ENCODE measurements at regions of chr1 and their contacts with region 1.

Region 1: GRCh38 chr1:192489748-192490147 is 85.8 kb upstream of the RGS1 start:
- DNase-seq: peak; percentile 53 to 80
- H3K4me3 ChIP-seq: no peak overlapping the region
- H3K27ac ChIP-seq: peak overlapping the region in 1 of 2 donors; percentile 56
- H3K4me1 ChIP-seq: peaks cover 0 to 9% of the 10 kb centered on the region in 2 donors
- H3K27me3 ChIP-seq: no peaks in the 10 kb centered on the region
- CTCF ChIP-seq: no peak

Region 2: DNA sequence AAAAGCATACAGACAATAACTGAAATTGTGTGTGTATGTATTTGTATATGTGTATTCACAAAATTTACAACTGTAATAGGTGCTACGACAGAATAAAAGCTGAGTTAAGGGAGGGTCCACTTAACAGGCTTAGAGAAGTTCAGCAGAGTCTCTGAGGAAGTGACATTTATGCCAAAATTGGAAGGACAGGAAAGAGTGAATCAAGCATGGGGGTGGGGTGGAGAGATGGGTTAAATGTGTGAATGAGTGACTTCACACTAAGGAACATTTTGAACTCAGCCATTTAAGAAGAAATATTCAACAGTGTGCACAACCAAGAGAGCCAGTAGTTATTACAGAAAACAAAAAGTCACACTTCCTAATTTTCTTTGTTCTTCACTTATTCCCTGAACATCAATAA is 32.0 kb after region 1 on chr1:
- intact Hi-C with region 1: loop called (anchors 5 kb)
- DNase-seq: no peak
- H3K4me3 ChIP-seq: no peak overlapping the region
- H3K27ac ChIP-seq: peak overlapping the region in 1 of 2 donors; percentile 27
- H3K4me1 ChIP-seq: peaks cover 8 to 27% of the 10 kb centered on the region in 2 donors
- H3K27me3 ChIP-seq: no peaks in the 10 kb centered on the region
- CTCF ChIP-seq: no peak

Region 3: GRCh38 chr1:192559115-192560006 is 69.6 kb after region 1 on chr1:
- intact Hi-C with region 1: loop called (anchors 5 kb)
- DNase-seq: no peak
- H3K4me3 ChIP-seq: no peak overlapping the region
- H3K27ac ChIP-seq: peak overlapping the region; percentile 73 to 77
- H3K4me1 ChIP-seq: peaks cover 0 to 7% of the 10 kb centered on the region in 2 donors
- H3K27me3 ChIP-seq: no peaks in the 10 kb centered on the region
- CTCF ChIP-seq: no peak

Region 4: GRCh38 chr1:192904438-192904895 is 414.7 kb after region 1 on chr1:
- intact Hi-C with region 1: loop called (anchors 10 kb)
- DNase-seq: peak in 1 of 2 donors; percentile 79
- H3K4me3 ChIP-seq: peak overlapping the region in 1 of 2 donors; percentile 31
- H3K27ac ChIP-seq: peak overlapping the region; percentile 13 to 60
- H3K4me1 ChIP-seq: peaks cover 0 to 11% of the 10 kb centered on the region in 2 donors
- H3K27me3 ChIP-seq: no peaks in the 10 kb centered on the region
- CTCF ChIP-seq: no peak